PC-3 (cell line): ENCODE measurements at regions of chr1 and their contacts with region 1.

Region 1: GRCh38 chr1:14666373-14666772 is 67.9 kb downstream of the KAZN start:
- DNase-seq: peak; percentile 58
- ATAC-seq: peak; percentile 40; the same call in 1 of the 2 replicates
- H3K4me3 ChIP-seq: no peak overlapping the region
- H3K27ac ChIP-seq: no peak overlapping the region
- H3K4me1 ChIP-seq: peaks cover 7% of the 10 kb centered on the region; the same call in 1 of the 2 replicates
- H3K27me3 ChIP-seq: no peaks in the 10 kb centered on the region
- CTCF ChIP-seq: no peak

Region 2: GRCh38 chr1:14590781-14591180 is 75.6 kb before region 1 on chr1:
- CTCF ChIA-PET with region 1: no interaction called
- POLR2A ChIA-PET with region 1: no interaction called
- intact Hi-C with region 1: no loop called
- DNase-seq: no peak
- ATAC-seq: no peak
- H3K4me3 ChIP-seq: no peak overlapping the region
- H3K27ac ChIP-seq: no peak overlapping the region
- H3K4me1 ChIP-seq: no peaks in the 10 kb centered on the region
- H3K27me3 ChIP-seq: no peaks in the 10 kb centered on the region
- CTCF ChIP-seq: no peak

Region 3: GRCh38 chr1:14733048-14733778 is 66.8 kb after region 1 on chr1:
- CTCF ChIA-PET with region 1: no interaction called
- POLR2A ChIA-PET with region 1: interaction called, 15 read pairs
- intact Hi-C with region 1: no loop called
- DNase-seq: no peak
- ATAC-seq: no peak
- H3K4me3 ChIP-seq: no peak overlapping the region
- H3K27ac ChIP-seq: no peak overlapping the region
- H3K4me1 ChIP-seq: peaks cover 24% of the 10 kb centered on the region
- H3K27me3 ChIP-seq: no peaks in the 10 kb centered on the region
- CTCF ChIP-seq: no peak

Region 4: GRCh38 chr1:14755518-14756252 is 89.3 kb after region 1 on chr1:
- CTCF ChIA-PET with region 1: no interaction called
- POLR2A ChIA-PET with region 1: no interaction called
- intact Hi-C with region 1: no loop called
- DNase-seq: no peak
- ATAC-seq: no peak
- H3K4me3 ChIP-seq: no peak overlapping the region
- H3K27ac ChIP-seq: no peak overlapping the region
- H3K4me1 ChIP-seq: 0 out of 2 replicates have a peak, but pooled peaks cover 4% of the 10 kb centered on the region
- H3K27me3 ChIP-seq: no peaks in the 10 kb centered on the region
- CTCF ChIP-seq: no peak